ENCODE measurements at regions of chr15 and their contacts with region 1.

Region 1: GRCh38 chr15:68383161-68384074 is 48.5 kb downstream of the ITGA11 start:
- DNase-seq: peak; percentile 57
- H3K4me3 ChIP-seq: no peak overlapping the region
- H3K27ac ChIP-seq: no peak overlapping the region
- H3K4me1 ChIP-seq: no peaks in the 10 kb centered on the region
- H3K27me3 ChIP-seq: no peaks in the 10 kb centered on the region
- CTCF ChIP-seq: peak; percentile 76

Region 2: GRCh38 chr15:68252925-68253534 is 130.4 kb before region 1 on chr15:
- intact Hi-C with region 1: loop called (anchors 5 kb)
- DNase-seq: peak; percentile 56
- H3K4me3 ChIP-seq: no peak overlapping the region
- H3K27ac ChIP-seq: no peak overlapping the region
- H3K4me1 ChIP-seq: no peaks in the 10 kb centered on the region
- H3K27me3 ChIP-seq: no peaks in the 10 kb centered on the region
- CTCF ChIP-seq: peak; percentile 84

Region 3: DNA sequence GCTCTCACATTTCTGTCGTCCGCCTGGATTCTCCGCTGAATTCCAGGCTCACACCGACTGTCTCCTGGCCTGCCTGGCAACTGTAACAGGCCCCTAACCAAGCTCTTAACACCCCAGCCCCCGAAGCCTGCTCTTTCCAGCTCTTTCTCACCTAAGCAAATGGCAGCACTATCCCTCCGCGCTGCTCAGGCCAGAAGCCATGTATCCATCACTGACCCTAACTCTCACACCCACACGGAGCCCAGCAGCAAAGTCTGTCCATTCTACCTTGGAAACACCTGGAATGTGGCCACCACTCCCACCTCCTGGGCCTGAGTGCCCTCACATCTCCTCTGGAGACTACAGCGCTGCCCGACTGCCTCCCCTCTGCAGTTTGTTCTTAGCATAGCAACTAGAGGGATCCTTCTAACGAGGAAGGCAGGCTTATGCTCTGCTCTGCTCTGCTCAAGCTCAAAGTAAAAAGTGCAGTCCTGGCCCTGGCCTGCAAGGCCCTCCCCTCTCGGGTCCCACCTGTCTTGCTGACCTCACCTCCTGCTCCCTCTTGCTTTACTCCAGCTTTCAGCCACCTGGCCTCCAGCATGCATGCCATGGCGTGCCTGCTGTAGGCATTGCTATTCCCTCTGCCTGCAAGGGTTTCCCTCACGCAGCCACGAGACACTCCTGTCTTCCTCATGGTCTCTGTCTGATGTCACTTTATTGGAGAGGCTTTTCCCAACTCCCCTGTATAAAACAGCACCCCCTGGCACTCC is 78.7 kb before region 1 on chr15:
- intact Hi-C with region 1: loop called (anchors 2 kb)
- DNase-seq: peak; percentile 15
- H3K4me3 ChIP-seq: no peak overlapping the region
- H3K27ac ChIP-seq: no peak overlapping the region
- H3K4me1 ChIP-seq: peaks cover 2% of the 10 kb centered on the region
- H3K27me3 ChIP-seq: no peaks in the 10 kb centered on the region
- CTCF ChIP-seq: no peak

Region 4: DNA sequence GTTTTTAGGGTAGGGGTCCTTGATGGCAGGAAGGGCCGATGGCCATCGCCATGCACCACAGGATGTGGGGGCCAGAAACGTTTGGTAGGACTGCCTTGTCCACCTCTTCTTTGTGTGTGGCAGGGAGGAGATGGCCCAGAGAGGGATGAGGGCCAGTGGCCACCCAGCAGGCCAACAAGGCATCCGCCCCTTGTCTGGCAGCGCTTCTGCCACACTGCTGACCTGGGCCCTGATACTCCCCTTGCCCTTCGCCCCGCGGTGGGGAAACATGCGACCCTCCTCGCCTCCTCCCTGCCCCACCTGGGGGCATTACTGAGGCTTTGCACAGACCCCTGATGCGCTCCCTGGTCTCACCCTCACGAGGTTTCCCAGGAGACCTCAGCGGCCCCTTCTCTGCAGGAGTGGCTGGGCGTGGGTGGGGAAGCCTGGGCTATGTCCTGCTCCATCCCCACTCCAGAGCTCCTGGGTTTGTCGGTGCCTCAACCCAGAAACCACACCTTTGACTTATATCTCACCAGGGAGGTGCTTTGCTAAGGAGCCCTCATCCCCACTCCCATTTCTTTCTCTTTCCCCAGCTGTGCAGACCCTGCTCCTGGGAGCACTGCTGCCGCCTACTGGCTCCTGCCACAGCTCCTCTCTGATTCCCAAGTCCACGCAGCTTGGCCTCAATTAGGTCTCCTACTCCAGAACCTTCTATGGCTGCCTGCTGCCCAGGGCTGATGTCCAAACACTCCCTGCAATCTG is 67.2 kb before region 1 on chr15:
- intact Hi-C with region 1: no loop called
- DNase-seq: no peak
- H3K4me3 ChIP-seq: no peak overlapping the region
- H3K27ac ChIP-seq: no peak overlapping the region
- H3K4me1 ChIP-seq: no peaks in the 10 kb centered on the region
- H3K27me3 ChIP-seq: no peaks in the 10 kb centered on the region
- CTCF ChIP-seq: no peak